HAP-1 (cell line): ENCODE measurements at regions of chr3 and their contacts with region 1.

Region 1: DNA sequence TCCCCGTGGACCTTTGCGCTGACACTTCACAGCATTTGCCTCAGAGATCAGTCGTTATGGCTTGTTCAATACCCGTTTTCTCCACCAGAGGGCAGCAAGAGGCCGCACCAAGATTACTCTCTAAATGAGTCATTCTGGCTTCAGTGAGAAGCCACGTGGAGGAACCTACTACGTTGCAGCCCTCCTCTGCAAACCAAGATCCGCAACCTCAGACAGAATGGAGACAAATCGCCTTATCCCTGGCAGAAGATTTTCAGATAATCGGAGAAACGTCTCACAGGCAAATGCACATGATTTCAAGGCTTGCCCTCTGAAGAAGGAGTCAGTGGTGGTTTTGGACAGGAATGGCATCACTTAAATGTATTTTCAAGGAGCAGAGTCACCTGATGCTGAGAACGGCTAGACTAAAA is 60.5 kb downstream of the GTPBP8 start:
- DNase-seq: peak; percentile 80 to 92
- H3K4me3 ChIP-seq: no peak overlapping the region
- H3K4me1 ChIP-seq: peaks cover 7% of the 10 kb centered on the region
- H3K27me3 ChIP-seq: no peaks in the 10 kb centered on the region

Region 2: DNA sequence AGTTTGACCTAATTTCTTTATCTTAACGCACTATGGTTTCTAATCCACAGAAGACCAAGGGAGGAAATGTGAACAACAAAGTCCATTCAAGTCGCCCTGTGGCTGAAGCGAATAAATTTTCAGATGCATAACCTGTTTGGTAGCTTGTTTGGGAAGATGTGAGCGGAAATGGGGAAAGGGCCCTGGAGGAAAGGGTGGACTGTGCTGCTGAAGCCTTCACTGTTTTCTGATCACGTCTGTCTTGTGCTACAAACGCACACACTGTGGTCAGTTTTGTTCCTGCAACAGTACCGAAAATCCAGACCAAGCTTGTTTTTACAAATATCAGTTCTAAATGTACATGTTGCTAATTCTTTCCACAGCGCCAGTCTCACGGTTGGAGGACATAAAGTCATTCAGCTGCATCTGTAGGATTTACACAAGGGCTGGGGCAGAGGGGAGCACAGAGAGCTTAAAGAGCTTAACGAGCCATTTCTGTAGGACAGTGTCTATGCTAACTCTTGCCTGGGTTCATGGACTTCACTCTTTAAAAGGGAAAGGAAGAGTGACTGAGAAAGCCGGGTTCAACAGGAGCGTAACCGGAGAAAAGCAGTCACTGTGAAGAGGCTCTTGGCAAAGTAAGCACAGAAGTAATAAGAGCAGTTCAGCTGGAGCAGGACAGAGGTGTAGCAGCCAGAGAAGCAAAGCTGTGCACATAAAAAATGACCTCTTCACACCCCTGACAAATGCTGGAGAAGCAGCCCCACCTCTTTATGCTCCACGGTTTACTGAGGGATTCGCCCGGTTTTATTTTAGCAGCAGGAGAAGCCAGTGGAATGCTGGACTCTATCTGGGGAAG is 578.5 kb after region 1 on chr3:
- in situ Hi-C with region 1: loop called (anchors 10 kb)
- DNase-seq: no peak
- H3K4me3 ChIP-seq: no peak overlapping the region
- H3K4me1 ChIP-seq: peaks cover 3% of the 10 kb centered on the region; the same call in 1 of the 2 replicates
- H3K27me3 ChIP-seq: no peaks in the 10 kb centered on the region